Activated T-helper 2 cell treated with anti-CD3 and anti-CD28 coated beads, Interferon-gamma antibody, Interleukin-2, Interleukin-4, amounts not matched to agents 10 μg/mL and 5 μg/mL and 100 μg/mL, durations not matched to agents 14 hours and 24 hours and 36 hours (primary cell): ENCODE measurements at regions of chr1 and their contacts with region 1.

Region 1: DNA sequence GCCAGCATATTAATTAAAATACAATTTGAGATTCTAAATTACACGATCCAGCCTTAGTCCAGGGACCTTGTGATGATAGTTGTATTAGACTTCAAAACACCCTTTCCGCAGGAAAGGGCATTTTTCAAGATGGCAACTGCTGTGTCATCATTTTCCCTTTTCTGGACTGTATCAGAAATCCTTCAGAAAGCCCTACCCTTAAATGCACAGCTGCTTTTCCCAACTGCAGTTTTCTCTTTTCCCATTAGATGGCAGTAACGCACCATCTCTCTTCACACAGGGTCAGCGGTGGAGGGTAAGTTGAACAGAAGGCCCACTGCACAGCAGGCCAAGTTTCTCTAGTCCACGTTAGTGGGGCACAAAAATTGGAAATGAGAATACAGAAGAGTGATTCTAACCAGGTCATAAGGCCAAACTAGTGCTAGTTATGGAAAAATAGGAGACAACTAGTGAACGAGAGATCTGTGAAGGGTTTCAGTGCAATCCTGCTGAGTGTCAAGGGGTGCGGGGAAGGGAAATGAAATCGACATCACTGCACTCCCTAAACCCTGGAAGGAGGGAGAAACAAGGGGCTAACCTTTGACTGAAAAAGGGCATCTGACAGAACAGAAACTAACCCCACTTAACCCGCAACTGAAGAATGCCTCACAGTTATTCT is 22.1 kb upstream of the TDRD10 start:
- DNase-seq: peak; percentile 56
- H3K4me3 Mint-ChIP-seq: no peak overlapping the region
- H3K27ac Mint-ChIP-seq: no peak overlapping the region
- H3K4me1 Mint-ChIP-seq: peaks cover 18% of the 10 kb centered on the region
- H3K27me3 Mint-ChIP-seq: peaks cover 5% of the 10 kb centered on the region

Region 2: DNA sequence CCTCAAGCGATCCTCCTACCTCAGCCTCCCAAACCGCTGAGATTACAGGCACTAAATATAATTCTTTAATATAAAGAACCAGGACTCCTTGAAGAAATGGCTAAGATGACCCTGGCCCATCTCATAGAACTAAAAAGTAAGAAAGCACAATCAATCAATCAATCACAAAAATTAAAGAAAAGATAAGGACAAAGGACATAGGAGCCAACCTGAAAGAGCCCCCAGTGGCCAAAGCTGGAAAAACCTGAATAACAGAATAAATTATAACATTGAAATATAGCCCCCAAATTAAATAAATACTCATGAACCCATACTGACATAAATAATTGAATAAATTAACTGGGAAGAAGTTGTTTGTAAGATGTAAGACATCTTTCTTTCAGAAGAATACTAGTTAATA is 333.9 kb before region 1 on chr1:
- intact Hi-C with region 1: no loop called
- DNase-seq: no peak
- H3K4me3 Mint-ChIP-seq: no peak overlapping the region
- H3K27ac Mint-ChIP-seq: no peak overlapping the region
- H3K4me1 Mint-ChIP-seq: peaks cover 10% of the 10 kb centered on the region
- H3K27me3 Mint-ChIP-seq: no peaks in the 10 kb centered on the region

Region 3: GRCh38 chr1:154546264-154547063 is 66.6 kb after region 1 on chr1:
- intact Hi-C with region 1: loop called (anchors 1 kb)
- DNase-seq: peak; percentile 37
- H3K4me3 Mint-ChIP-seq: no peak overlapping the region
- H3K27ac Mint-ChIP-seq: no peak overlapping the region
- H3K4me1 Mint-ChIP-seq: peaks cover 8% of the 10 kb centered on the region
- H3K27me3 Mint-ChIP-seq: no peaks in the 10 kb centered on the region